PC-3 (cell line): ENCODE measurements at regions of chr1 and their contacts with region 1.

Region 1: GRCh38 chr1:217911908-217912307 is 280.8 kb downstream of the SPATA17 start:
- DNase-seq: peak; percentile 67
- ATAC-seq: peak; percentile 74
- H3K4me3 ChIP-seq: no peak overlapping the region
- H3K27ac ChIP-seq: no peak overlapping the region
- H3K4me1 ChIP-seq: 0 out of 2 replicates have a peak, but pooled peaks cover 6% of the 10 kb centered on the region
- H3K27me3 ChIP-seq: no peaks in the 10 kb centered on the region
- CTCF ChIP-seq: peak; percentile 91

Region 2: GRCh38 chr1:217343914-217344313 is 568.0 kb before region 1 on chr1:
- CTCF ChIA-PET with region 1: no interaction called
- POLR2A ChIA-PET with region 1: no interaction called
- intact Hi-C with region 1: loop called (anchors 10 kb)
- DNase-seq: no peak
- ATAC-seq: no peak
- H3K4me3 ChIP-seq: no peak overlapping the region
- H3K27ac ChIP-seq: no peak overlapping the region
- H3K4me1 ChIP-seq: no peaks in the 10 kb centered on the region
- H3K27me3 ChIP-seq: peaks cover 9% of the 10 kb centered on the region; the same call in 1 of the 2 replicates
- CTCF ChIP-seq: no peak